ENCODE measurements at regions of chr2 and their contacts with region 1.

Region 1: DNA sequence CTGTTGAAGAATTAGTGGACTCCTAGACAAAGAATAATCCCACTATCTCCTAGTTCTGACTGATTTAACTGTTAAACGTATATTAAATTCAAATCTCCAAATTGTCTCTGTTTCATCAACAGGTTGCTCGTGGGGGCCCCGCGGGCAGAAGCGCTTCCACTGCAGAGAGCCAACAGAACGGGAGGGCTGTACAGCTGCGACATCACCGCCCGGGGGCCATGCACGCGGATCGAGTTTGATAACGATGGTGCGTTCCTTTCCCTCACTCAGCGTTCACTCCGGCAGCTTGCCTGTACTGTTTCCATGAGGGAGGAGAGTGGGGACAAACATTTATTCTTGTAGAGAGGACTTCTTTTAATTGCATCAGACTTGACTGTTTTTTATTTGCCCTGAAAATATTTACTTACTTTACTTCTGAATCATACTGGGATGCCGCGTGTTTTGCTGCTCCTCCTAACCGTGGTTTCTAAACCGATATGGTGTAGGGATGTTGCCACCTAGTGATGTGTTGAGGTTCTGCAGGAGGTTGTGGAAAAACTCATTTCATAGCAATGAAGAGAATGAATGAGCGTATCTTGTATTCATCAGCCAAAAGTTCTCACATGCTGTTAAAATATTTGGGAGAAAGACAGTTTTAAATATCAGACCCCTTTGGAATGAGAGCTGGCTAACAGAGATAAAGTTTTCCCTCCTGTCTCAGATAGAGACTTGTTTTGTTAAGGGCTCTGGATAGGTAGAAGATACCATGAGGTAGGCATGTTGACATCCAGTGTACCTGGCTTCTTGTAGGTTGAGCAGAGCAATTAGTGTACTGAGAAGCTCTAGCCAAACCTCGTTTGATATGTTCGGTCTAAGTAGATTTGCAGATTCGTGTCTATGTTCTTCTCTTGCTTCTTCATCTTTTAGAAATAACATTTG is 38.3 kb downstream of the ITGA6 start:
- DNase-seq: peak; percentile 56
- H3K4me3 ChIP-seq: peak overlapping the region; percentile 52
- CTCF ChIP-seq: peak; percentile 73

Region 2: GRCh38 chr2:171703574-171704347 is 761.9 kb before region 1 on chr2:
- CTCF ChIA-PET with region 1: interaction called, 13 read pairs
- POLR2A ChIA-PET with region 1: no interaction called
- DNase-seq: no peak
- H3K4me3 ChIP-seq: no peak overlapping the region
- CTCF ChIP-seq: peak; percentile 28

Region 3: DNA sequence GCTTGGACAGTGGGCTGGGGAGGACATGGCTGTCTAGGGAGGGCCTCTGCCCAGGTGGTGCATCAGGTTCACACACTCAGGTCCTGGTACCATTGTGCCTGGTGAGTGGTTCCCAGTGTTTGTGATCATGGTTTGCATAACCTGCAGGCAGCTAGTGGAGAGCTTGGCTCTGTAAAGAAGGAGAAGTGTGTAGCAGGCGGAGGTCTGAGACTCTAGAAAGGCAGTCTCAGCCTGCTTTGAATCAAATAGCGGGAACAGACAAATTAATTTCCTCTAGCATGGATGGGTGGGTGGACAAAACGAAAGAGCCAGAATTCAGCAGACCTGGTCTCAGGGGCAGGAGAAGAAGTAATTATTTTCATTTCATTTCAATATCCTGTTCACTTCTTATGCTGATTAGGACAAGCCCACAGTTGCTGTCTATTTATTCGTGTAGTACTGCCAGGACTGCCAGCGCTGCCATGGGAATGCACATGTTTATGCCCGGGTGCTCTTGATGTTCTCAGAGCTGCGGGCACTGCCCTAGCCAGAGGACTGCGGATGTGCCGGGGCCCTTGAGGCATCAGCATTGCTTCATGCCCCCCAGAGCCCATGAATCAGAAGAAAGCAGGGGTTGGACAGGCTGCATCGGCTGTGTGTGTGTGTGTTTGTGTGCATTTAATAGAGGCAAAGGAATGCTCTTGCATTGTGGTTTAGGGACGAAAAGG is 317.6 kb before region 1 on chr2:
- CTCF ChIA-PET with region 1: interaction called, 13 read pairs
- POLR2A ChIA-PET with region 1: no interaction called
- DNase-seq: no peak
- H3K4me3 ChIP-seq: peak overlapping the region; percentile 20; the same call in 1 of the 2 replicates
- CTCF ChIP-seq: no peak

Region 4: DNA sequence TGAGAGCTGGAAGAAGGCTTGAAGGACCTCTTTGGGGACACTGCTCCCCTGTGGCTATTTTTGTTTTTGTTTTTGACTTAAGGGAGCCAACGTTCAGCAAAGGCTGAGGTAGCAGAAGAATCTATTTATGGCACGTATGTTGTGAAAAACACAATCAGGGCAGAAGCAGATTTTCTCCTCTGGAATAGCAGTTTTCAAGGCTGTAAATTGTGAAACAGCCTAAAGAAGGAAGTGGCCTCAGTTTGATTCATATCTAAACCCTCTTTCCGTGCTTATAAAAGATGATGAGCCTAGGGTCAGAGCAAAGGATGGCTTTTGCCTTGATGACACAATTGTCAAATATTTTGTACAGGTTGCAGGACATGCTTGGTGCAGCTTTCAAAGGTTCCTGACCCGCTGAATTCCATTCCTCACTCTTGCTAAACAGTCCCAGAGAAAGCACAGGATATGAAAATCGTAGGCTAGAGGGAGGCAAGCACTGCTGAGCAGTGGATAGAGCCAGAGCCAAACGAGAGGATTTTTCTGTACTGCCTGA is 256.8 kb before region 1 on chr2:
- CTCF ChIA-PET with region 1: interaction called, 164 read pairs
- POLR2A ChIA-PET with region 1: no interaction called
- DNase-seq: peak; percentile 33
- H3K4me3 ChIP-seq: no peak overlapping the region
- CTCF ChIP-seq: no peak

Region 5: DNA sequence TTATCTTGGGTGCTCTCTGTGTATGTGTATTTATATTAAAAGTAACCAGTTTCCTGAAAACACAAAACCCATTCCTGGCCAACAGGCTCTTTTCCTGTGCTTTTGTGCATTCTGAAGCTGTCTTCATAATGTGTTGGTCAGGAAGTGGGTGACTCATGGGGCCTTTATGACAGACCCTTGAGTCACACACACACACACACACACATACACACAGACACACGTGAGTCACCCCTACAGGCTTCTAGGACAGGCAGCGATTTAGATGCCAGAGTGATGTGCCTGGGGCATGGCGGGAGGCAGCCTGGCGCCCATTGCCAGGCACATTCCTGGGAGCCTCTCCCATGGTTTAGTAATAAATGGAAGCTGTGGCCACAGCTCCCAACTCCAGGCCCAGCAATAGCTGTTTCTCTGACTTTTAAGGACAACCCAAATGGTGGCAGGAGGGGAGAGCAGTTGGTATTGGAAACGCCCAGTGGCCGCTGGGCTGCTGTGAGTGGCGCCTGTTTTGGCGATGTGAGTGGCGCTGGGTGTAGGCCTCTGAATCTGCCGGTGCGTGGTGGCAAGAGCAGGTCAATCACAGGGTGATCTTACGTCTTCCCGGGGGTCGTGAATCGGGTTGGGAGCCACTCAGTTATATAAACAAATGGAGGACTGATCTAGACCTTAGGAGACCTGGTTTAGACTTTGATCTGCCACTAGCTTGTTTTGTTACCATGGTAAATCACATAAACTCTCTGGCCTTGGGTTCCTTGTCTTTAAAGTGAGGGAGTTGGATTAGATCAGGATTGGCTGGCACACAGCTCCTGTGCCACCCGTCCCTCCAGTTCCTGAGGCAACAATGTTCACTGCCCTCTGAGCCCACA is 212.3 kb before region 1 on chr2:
- CTCF ChIA-PET with region 1: interaction called, 66 read pairs
- POLR2A ChIA-PET with region 1: interaction called, 4 read pairs
- DNase-seq: peak; percentile 100
- H3K4me3 ChIP-seq: no peak overlapping the region
- CTCF ChIP-seq: no peak

Region 6: GRCh38 chr2:172333235-172333977 is 132.3 kb before region 1 on chr2:
- CTCF ChIA-PET with region 1: interaction called, 11 read pairs
- POLR2A ChIA-PET with region 1: no interaction called
- DNase-seq: no peak
- H3K4me3 ChIP-seq: no peak overlapping the region
- CTCF ChIP-seq: no peak

Region 7: GRCh38 chr2:172484253-172484652 is 18.6 kb after region 1 on chr2:
- CTCF ChIA-PET with region 1: interaction called, 229 read pairs
- POLR2A ChIA-PET with region 1: no interaction called
- DNase-seq: no peak
- H3K4me3 ChIP-seq: no peak overlapping the region
- CTCF ChIP-seq: no peak